GM12878 (cell line): ENCODE measurements at regions of chr2 and their contacts with region 1.

Region 1: GRCh38 chr2:165818920-165819319 is 24.9 kb upstream of the GALNT3 start:
- DNase-seq: no peak
- ATAC-seq: no peak
- H3K4me3 ChIP-seq: no peak overlapping the region
- H3K27ac ChIP-seq: no peak overlapping the region
- H3K4me1 ChIP-seq: peaks cover 13% of the 10 kb centered on the region; the same call in 1 of the 2 replicates
- H3K27me3 ChIP-seq: no peaks in the 10 kb centered on the region
- CTCF ChIP-seq: no peak
- EP300 ChIP-seq: no peak
- POLR2A ChIP-seq: no peak
- RAD21 ChIP-seq: no peak

Region 2: GRCh38 chr2:165772183-165772582 is 46.7 kb before region 1 on chr2:
- CTCF ChIA-PET with region 1: no interaction called
- POLR2A ChIA-PET with region 1: no interaction called
- RAD21 ChIA-PET with region 1: no interaction called
- SMC1A ChIA-PET with region 1: no interaction called
- in situ Hi-C with region 1: no loop called
- intact Hi-C with region 1: loop called (anchors 2 kb)
- DNase-seq: no peak
- ATAC-seq: no peak
- H3K4me3 ChIP-seq: no peak overlapping the region
- H3K27ac ChIP-seq: no peak overlapping the region
- H3K4me1 ChIP-seq: no peaks in the 10 kb centered on the region
- H3K27me3 ChIP-seq: no peaks in the 10 kb centered on the region
- CTCF ChIP-seq: no peak
- EP300 ChIP-seq: no peak
- POLR2A ChIP-seq: no peak
- RAD21 ChIP-seq: no peak

Region 3: DNA sequence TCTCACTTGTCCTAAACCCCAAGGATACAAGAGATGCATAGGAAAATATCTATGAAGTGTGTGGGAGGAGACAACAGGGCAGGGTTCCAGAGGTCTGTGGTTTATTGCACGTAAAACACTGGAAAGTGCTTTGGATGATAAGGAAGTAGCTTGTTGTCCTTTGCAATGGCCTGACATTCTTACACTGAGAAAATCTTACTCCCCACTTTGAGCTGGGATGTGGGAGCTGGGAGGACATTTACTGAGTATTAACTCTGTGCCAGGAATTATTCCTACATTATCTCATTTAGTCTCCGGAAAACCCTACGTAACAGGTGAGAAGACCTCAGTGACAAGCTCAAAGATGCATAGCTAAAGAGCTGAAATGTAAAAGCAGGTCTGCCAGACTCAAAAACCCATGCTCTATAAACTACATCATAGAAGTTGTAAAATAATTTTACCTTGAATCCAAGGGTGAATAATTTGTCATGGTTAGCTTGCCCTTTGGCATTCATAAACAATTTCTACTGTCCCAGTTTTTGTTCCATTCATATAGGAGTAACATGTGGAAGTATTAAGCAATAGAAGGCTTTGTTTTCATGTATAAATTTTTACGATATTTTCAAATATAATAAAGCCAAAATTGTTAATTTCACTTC is 15.7 kb before region 1 on chr2:
- CTCF ChIA-PET with region 1: no interaction called
- POLR2A ChIA-PET with region 1: no interaction called
- RAD21 ChIA-PET with region 1: no interaction called
- SMC1A ChIA-PET with region 1: no interaction called
- in situ Hi-C with region 1: no loop called
- intact Hi-C with region 1: no loop called
- DNase-seq: no peak
- ATAC-seq: no peak
- H3K4me3 ChIP-seq: no peak overlapping the region
- H3K27ac ChIP-seq: no peak overlapping the region
- H3K4me1 ChIP-seq: no peaks in the 10 kb centered on the region
- H3K27me3 ChIP-seq: no peaks in the 10 kb centered on the region
- CTCF ChIP-seq: no peak
- EP300 ChIP-seq: no peak
- POLR2A ChIP-seq: no peak
- RAD21 ChIP-seq: no peak

Region 4: DNA sequence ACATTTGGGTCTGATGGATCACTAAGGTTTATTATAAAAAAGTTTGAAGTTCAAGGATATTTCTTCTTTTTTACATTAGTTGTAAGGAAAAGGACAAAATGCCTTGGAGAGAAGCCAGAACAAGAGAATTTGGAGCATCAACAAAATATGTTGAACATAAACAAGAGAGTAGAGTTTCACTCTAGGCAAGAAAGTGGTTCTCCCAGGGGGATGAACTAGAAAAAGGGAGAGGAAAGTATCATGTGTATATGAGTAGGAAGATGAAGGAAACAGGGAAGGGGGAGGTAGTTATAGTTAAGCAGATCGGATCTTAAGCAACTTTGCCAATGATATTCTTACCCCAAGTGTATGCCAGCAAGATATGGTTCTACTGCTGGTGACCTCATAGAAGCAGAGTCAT is 39.0 kb after region 1 on chr2:
- CTCF ChIA-PET with region 1: no interaction called
- POLR2A ChIA-PET with region 1: no interaction called
- RAD21 ChIA-PET with region 1: no interaction called
- SMC1A ChIA-PET with region 1: no interaction called
- in situ Hi-C with region 1: no loop called
- intact Hi-C with region 1: no loop called
- DNase-seq: no peak
- ATAC-seq: no peak
- H3K4me3 ChIP-seq: no peak overlapping the region
- H3K27ac ChIP-seq: no peak overlapping the region
- H3K4me1 ChIP-seq: no peaks in the 10 kb centered on the region
- H3K27me3 ChIP-seq: no peaks in the 10 kb centered on the region
- CTCF ChIP-seq: no peak
- EP300 ChIP-seq: no peak
- POLR2A ChIP-seq: no peak
- RAD21 ChIP-seq: no peak